ENCODE measurements at regions of chr14 and their contacts with region 1.

Region 1: DNA sequence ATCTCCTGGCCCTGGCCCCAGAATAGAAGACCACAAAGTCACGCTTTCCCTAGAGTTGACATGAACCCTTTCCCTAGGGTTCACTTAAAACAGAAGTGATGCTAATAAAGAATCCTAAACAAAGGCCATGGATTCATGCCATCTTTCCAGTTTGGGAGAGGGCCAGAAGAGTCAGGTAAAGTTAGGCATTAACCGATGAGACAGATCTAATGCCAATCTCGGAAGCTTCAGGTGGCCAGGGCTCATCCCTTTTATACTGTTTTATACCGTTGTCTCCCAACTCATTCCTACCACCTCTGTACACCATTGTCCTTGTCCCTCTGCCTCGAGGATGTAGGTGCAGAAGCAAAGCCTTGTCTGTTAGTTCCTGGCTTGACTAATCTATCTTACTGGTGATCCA is 22.8 kb upstream of the ACTR10 start:
- DNase-seq: no peak
- H3K4me3 ChIP-seq: no peak overlapping the region
- CTCF ChIP-seq: no peak

Region 2: GRCh38 chr14:58166005-58166983 is 10.8 kb before region 1 on chr14:
- CTCF ChIA-PET with region 1: interaction called, 26 read pairs
- POLR2A ChIA-PET with region 1: interaction called, 3 read pairs
- DNase-seq: peak; percentile 23
- H3K4me3 ChIP-seq: no peak overlapping the region
- CTCF ChIP-seq: peak; percentile 84

Region 3: DNA sequence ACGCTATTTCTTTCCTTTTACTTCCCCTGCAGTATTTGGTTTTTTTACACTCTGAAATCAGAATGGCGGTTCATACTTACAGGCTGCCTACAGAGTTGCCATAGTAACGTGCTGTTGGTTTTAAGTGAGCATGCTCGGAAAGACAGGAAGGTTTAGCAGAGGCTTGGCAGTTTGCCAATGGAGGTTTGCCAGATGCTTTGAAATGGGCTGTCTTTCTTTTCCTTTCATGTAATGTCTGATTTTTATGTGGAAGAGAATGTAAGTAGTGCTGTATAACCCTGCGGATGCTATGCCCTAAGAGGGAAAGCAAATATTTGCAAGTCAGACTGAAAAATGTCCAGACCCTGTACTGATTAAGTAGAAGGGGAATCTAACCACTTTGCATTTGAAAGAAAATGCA is 154.0 kb after region 1 on chr14:
- CTCF ChIA-PET with region 1: no interaction called
- POLR2A ChIA-PET with region 1: no interaction called
- DNase-seq: peak; percentile 88
- H3K4me3 ChIP-seq: no peak overlapping the region
- CTCF ChIP-seq: no peak